ENCODE measurements at regions of chr1 and their contacts with region 1.

Region 1: DNA sequence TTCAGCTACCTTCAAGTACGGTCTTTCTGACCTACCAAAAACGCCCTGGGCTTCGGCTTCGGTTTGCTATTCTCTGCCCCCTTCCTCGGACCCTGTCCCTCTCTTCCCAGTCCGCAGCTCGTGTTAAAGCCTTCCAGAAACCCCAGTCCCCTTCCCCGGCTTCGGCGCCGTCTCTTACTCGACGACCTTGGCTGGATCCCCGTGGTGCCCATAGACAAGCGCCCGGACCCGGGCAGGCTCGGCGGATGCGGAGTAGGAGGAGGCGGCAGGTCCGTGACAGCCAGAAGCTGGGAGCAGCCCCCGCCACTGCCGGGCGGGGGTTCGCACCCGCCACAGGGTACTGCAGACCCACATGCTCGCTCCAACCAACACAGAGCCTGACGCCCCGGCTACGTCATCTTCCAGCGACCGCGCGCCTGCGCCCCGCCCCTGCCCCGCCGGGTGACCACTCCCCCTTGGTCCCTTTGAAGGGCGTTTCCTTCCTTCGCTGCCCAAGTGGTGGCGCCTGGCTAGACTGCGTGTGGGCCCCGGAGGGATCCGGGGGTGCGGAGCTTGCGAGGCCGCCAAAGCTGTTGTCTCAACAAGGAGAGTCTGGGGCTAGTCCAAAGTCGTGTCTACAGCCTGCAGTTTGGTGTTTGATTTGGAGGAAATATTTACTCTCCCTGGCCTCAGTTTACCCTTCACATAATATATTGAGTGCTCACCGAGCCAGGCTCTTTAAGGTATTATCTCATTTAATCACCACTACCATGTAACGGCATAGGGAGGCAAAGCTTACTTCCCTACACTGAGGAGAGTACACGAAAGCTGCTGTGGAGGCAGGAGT is at the start of gene MECR:
- DNase-seq: peak; percentile 98 to 99 (median 99)
- ATAC-seq: peak; percentile 97
- H3K4me3 ChIP-seq: peak within 1 kb of the TSS; percentile 78
- H3K27ac ChIP-seq: peak within 1 kb of the TSS; percentile 75
- H3K4me1 ChIP-seq: peaks cover 7 to 12% of the 10 kb centered on the region in 2 experiments; a peak in 3 of 5 replicates
- H3K27me3 ChIP-seq: no peaks in the 10 kb centered on the region
- CTCF ChIP-seq: peak; percentile 42 to 58 (median 47)
- EP300 ChIP-seq: peak; percentile 3; the same call in 1 of the 2 replicates
- POLR2A ChIP-seq: peak; percentile 91
- RAD21 ChIP-seq: peak in 1 of 2 experiments; percentile 3; a peak in 1 of 4 replicates
- polyA plus RNA-seq, gene MECR: 10.4 to 18.0 TPM

Region 2: GRCh38 chr1:29218223-29218622 is 12.5 kb before region 1 on chr1:
- CTCF ChIA-PET with region 1: no interaction called
- POLR2A ChIA-PET with region 1: interaction called, 18 read pairs
- in situ Hi-C with region 1: no loop called
- intact Hi-C with region 1: no loop called
- DNase-seq: no peak
- ATAC-seq: no peak
- H3K4me3 ChIP-seq: no peak overlapping the region
- H3K27ac ChIP-seq: no peak overlapping the region
- H3K4me1 ChIP-seq: no peaks in the 10 kb centered on the region
- H3K27me3 ChIP-seq: no peaks in the 10 kb centered on the region
- CTCF ChIP-seq: no peak
- EP300 ChIP-seq: no peak
- POLR2A ChIP-seq: no peak
- RAD21 ChIP-seq: no peak

Region 3: GRCh38 chr1:29703596-29704370 is 473.0 kb after region 1 on chr1:
- CTCF ChIA-PET with region 1: no interaction called
- POLR2A ChIA-PET with region 1: no interaction called
- in situ Hi-C with region 1: loop called (anchors 10 kb)
- intact Hi-C with region 1: no loop called
- DNase-seq: peak; percentile 36 to 61 (median 38)
- ATAC-seq: peak; percentile 79
- H3K4me3 ChIP-seq: no peak overlapping the region
- H3K27ac ChIP-seq: no peak overlapping the region
- H3K4me1 ChIP-seq: no peaks in the 10 kb centered on the region
- H3K27me3 ChIP-seq: peaks cover 0 to 7% of the 10 kb centered on the region in 2 experiments; a peak in 2 of 5 replicates
- CTCF ChIP-seq: peak; percentile 70 to 81 (median 77)
- EP300 ChIP-seq: no peak
- POLR2A ChIP-seq: no peak
- RAD21 ChIP-seq: peak in 1 of 2 experiments; percentile 47; a peak in 2 of 4 replicates

Region 4: DNA sequence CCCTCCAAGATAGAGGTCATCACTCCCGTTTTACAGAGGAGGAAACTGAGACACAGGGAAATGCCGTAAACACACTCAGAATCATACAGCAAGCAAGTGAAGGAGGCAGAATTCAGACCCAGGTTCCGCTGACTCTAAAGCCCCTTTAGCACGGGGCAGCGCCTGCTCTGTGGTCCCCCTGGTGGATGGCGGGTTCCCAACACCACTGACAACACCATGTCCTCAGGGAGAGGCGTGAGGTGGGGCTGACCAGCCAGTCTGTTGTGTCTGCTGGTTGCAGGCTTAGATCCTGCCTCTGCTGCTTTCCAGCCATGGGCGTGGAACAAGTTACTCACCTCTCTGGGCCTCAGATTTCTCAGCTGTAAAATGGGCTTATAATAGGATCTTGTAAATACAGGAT is 875.4 kb after region 1 on chr1:
- CTCF ChIA-PET with region 1: no interaction called
- POLR2A ChIA-PET with region 1: no interaction called
- in situ Hi-C with region 1: loop called (anchors 10 kb)
- intact Hi-C with region 1: loop called (anchors 10 kb)
- DNase-seq: peak; percentile 65 to 81 (median 75)
- ATAC-seq: peak; percentile 97
- H3K4me3 ChIP-seq: no peak overlapping the region
- H3K27ac ChIP-seq: no peak overlapping the region
- H3K4me1 ChIP-seq: no peaks in the 10 kb centered on the region; a peak in 1 of 5 replicates
- H3K27me3 ChIP-seq: peaks cover 13 to 38% of the 10 kb centered on the region in 2 experiments
- CTCF ChIP-seq: peak; percentile 71 to 84 (median 79)
- EP300 ChIP-seq: no peak
- POLR2A ChIP-seq: no peak
- RAD21 ChIP-seq: peak in 1 of 2 experiments; percentile 65; a peak in 3 of 4 replicates

Region 5: GRCh38 chr1:30111431-30111830 is 880.7 kb after region 1 on chr1:
- CTCF ChIA-PET with region 1: no interaction called
- POLR2A ChIA-PET with region 1: no interaction called
- in situ Hi-C with region 1: loop called (anchors 10 kb)
- intact Hi-C with region 1: loop called (anchors 10 kb)
- DNase-seq: peak; percentile 48 to 69 (median 58)
- ATAC-seq: peak; percentile 99
- H3K4me3 ChIP-seq: no peak overlapping the region
- H3K27ac ChIP-seq: no peak overlapping the region
- H3K4me1 ChIP-seq: no peaks in the 10 kb centered on the region; a peak in 1 of 5 replicates
- H3K27me3 ChIP-seq: peaks cover 20 to 31% of the 10 kb centered on the region in 2 experiments; a peak in 4 of 5 replicates
- CTCF ChIP-seq: peak; percentile 71 to 81 (median 79)
- EP300 ChIP-seq: no peak
- POLR2A ChIP-seq: no peak
- RAD21 ChIP-seq: peak; percentile 57 to 75

Measured in K562 (cell line).